Heart right ventricle (tissue), 16 donors: ENCODE measurements at regions of chr10 and their contacts with region 1.

Region 1: GRCh38 chr10:103859161-103860086 is 4.0 kb upstream of the SH3PXD2A start:
- DNase-seq: peak in 1 of 2 donors; percentile 73
- ATAC-seq: peak; percentile 41 to 81 (median 64)
- H3K4me3 ChIP-seq: no peak overlapping the region
- H3K27ac ChIP-seq: peak overlapping the region in 1 of 10 donors; percentile 42
- H3K4me1 ChIP-seq: peaks cover 0 to 29% (median 11%) of the 10 kb centered on the region in 9 donors
- H3K27me3 ChIP-seq: peaks cover 0 to 17% (median 0%) of the 10 kb centered on the region in 7 donors
- CTCF ChIP-seq: peak; percentile 57 to 85 (median 79)

Region 2: DNA sequence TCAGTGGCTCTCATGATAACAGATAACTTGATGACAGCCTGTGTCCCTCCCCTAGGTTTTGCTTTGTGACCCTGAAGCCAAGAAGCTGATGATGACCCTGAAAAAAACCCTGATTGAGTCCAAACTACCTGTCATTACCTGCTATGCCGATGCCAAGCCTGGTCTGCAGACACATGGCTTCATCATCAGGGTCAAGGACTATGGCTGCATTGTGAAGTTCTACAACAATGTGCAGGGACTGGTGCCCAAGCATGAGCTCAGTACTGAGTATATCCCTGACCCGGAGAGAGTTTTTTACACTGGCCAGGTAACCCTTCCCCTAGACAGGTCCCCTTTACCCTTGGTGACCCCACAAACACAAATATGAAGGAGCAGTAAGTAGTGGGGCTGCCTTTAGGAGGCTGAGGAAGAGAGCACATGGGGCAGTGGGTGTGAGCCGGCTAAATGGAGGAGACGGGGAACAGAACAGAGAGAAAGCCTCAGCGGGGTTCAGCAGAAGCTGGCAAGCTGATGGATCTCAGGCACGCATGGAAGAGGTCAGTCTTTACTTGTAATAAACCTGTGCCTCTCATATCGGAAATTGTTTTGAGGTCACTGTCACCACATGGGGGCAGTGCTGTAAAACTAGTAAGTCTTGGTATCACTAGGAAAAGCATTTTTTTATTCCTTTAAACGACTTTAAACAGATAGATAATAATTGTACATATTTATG is 442.8 kb before region 1 on chr10:
- intact Hi-C with region 1: loop called in 1 of 10 experiments (anchors 10 kb)
- DNase-seq: peak in 1 of 2 donors; percentile 67
- ATAC-seq: peak in 5 of 8 donors; percentile 30 to 69 (median 46)
- H3K4me3 ChIP-seq: no peak overlapping the region
- H3K27ac ChIP-seq: no peak overlapping the region
- H3K4me1 ChIP-seq: no peaks in the 10 kb centered on the region
- H3K27me3 ChIP-seq: no peaks in the 10 kb centered on the region
- CTCF ChIP-seq: peak; percentile 40 to 85 (median 72)

Region 3: GRCh38 chr10:103598654-103599115 is 260.7 kb before region 1 on chr10:
- intact Hi-C with region 1: loop called in 6 of 10 experiments (anchors 5 to 10 kb)
- DNase-seq: peak in 1 of 2 donors; percentile 59
- ATAC-seq: peak in 6 of 8 donors; percentile 27 to 73 (median 57)
- H3K4me3 ChIP-seq: no peak overlapping the region
- H3K27ac ChIP-seq: peak overlapping the region in 2 of 10 donors; percentile 3 to 40
- H3K4me1 ChIP-seq: peaks cover 0 to 36% (median 11%) of the 10 kb centered on the region in 9 donors
- H3K27me3 ChIP-seq: no peaks in the 10 kb centered on the region
- CTCF ChIP-seq: peak; percentile 35 to 76 (median 66)

Region 4: DNA sequence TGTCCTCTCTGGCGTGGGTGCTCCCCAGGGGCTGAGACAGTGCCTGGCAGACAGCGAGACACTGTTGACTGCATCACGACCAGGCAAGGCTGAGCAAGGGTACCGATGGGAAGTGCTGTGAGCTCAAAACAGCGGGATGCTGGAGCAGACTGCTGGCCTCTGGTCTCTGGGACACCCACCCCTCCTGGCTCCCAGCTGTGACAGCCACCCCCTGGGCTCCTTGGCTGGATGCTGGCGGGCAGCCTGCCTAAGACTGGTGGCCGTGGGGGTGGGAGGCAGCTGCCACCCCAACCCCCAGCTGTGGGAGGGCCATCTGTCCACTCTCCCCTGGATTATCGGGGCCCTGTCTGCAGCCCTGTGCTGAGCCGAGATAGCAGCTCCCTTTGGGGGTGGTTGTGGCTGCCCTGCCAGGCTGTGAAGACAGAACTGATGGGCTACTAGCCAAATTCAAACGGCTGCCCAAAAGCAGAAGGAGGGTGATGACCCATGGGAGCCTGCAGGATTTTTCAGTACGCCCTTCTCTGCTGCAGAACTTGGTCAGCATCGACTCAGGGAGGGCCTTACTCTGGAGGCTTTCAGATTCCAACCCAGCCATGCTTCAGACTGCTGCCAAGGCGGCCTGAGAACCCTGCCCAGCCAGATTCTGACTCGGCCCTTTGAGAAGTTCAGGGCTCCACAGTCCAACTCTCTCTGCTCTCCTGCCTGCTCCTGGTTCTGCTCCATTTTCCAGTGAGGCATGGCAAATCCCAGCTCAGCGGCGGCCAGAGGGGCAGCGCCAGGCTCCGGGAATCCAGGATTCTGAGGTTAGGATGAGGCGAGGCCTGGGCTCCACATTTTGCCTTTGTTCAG is 240.6 kb before region 1 on chr10:
- intact Hi-C with region 1: loop called in 1 of 10 experiments (anchors 10 kb)
- DNase-seq: peak; percentile 74 to 75
- ATAC-seq: peak; percentile 37 to 77 (median 44)
- H3K4me3 ChIP-seq: no peak overlapping the region
- H3K27ac ChIP-seq: peak overlapping the region in 9 of 10 donors; percentile 34 to 85 (median 72)
- H3K4me1 ChIP-seq: peaks cover 50 to 95% (median 87%) of the 10 kb centered on the region in 9 donors
- H3K27me3 ChIP-seq: no peaks in the 10 kb centered on the region
- CTCF ChIP-seq: no peak

Region 5: DNA sequence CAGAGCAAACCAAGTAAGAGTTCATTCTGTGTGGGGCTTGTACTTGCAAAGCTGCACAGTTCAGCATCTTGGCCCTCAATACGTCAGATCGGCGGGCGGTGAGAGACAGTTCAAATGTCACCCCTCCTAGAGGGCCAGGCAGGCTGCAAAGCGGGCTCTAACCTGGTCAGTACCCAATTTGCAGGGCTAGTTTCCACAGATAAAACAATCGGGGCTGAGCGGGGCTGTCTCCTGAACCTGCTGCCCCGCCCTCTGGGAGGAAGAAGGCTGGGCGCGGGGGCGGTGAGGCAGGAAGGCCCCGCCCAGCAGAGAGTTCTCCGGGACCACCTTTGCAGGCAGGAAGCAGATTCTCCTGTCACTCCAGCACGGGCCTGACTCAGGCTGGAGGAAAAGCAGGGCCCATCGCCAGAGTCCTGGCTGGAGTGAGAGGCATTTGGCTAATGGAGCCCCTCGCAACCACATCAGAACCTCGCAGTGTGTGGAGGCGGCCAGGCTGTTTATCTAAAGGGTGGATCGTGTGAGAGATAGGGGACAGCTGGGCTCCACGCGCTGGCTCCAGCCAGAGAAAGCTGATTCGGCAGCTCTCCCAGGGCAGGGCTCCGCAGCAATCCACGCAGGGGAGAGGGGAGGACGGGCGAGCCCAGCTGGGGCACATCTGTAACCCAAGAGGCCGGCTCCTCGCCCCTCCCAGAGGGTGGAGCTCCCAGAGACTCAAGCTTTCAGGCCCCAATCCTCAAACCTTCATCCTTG is 87.2 kb before region 1 on chr10:
- intact Hi-C with region 1: loop called in 3 of 10 experiments (anchors 5 to 10 kb)
- DNase-seq: peak; percentile 87
- ATAC-seq: peak; percentile 84 to 90 (median 88)
- H3K4me3 ChIP-seq: peak overlapping the region in 8 of 10 donors; percentile 9 to 54 (median 42)
- H3K27ac ChIP-seq: peak overlapping the region; percentile 59 to 89 (median 78)
- H3K4me1 ChIP-seq: peaks cover 6 to 38% (median 33%) of the 10 kb centered on the region in 9 donors
- H3K27me3 ChIP-seq: no peaks in the 10 kb centered on the region
- CTCF ChIP-seq: no peak

Region 6: DNA sequence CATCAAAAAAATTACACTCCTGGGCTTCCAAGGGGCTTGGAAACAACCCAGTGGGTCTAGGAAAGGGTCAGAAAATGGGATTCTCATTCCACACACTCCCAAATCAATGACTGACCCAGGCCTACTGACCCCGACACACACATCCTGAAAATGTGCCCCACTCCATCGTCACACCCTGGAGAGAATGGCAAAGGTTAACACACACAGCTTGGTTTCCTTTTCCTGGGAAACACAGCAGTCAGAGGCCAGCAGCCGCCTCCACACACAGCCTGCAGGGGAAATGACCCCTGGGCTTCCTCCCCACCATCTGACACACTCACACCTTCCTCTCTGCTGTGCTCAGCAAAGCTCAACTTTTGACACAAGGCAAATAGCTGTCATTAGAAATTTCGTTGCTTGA is 47.0 kb before region 1 on chr10:
- intact Hi-C with region 1: loop called in 1 of 10 experiments (anchors 5 kb)
- DNase-seq: peak in 1 of 2 donors; percentile 39
- ATAC-seq: peak in 7 of 8 donors; percentile 35 to 70 (median 45)
- H3K4me3 ChIP-seq: no peak overlapping the region
- H3K27ac ChIP-seq: peak overlapping the region in 2 of 10 donors; percentile 4 to 27
- H3K4me1 ChIP-seq: peaks cover 3 to 60% (median 27%) of the 10 kb centered on the region in 9 donors
- H3K27me3 ChIP-seq: no peaks in the 10 kb centered on the region
- CTCF ChIP-seq: no peak